Gastrocnemius medialis (tissue), 4 donors: ENCODE measurements at regions of chr20 and their contacts with region 1.

Region 1: GRCh38 chr20:37192137-37192854 is 12.9 kb upstream of the MROH8 start:
- DNase-seq: peak; percentile 74 to 87
- ATAC-seq: peak; percentile 72 to 87
- H3K4me3 ChIP-seq: no peak overlapping the region
- H3K27ac ChIP-seq: peak overlapping the region in 3 of 4 donors; percentile 40 to 72 (median 47)
- H3K4me1 ChIP-seq: peaks cover 47 to 50% of the 10 kb centered on the region in 2 donors
- H3K27me3 ChIP-seq: no peaks in the 10 kb centered on the region
- CTCF ChIP-seq: peak; percentile 73 to 95 (median 85)
- POLR2A ChIP-seq: no peak

Region 2: GRCh38 chr20:37238935-37239451 is 46.7 kb after region 1 on chr20:
- in situ Hi-C with region 1: no loop called
- intact Hi-C with region 1: no loop called
- DNase-seq: no peak
- ATAC-seq: peak in 1 of 2 donors; percentile 39
- H3K4me3 ChIP-seq: no peak overlapping the region
- H3K27ac ChIP-seq: peak overlapping the region in 2 of 4 donors; percentile 23 to 51
- H3K4me1 ChIP-seq: peaks cover 35 to 52% of the 10 kb centered on the region in 2 donors
- H3K27me3 ChIP-seq: no peaks in the 10 kb centered on the region
- CTCF ChIP-seq: no peak
- POLR2A ChIP-seq: no peak

Region 3: DNA sequence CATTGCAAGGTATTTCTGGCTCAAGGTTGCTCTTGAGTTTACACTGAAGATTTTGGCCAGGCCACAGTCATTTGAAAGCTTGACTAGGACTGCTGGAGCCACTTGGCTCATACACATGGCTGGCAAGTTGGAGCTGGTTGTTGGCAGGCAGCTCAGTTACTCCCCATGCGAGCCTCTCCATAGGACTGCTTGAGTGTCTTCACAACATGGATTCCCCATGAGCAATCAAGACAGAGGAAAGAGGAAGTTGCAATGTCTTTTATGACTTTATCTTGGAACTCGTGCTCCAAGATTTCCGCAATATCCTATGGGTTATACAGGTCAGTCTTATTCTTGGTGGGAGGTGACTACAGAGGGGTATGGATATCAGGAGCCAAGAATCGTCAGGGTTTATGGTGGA is 95.8 kb after region 1 on chr20:
- in situ Hi-C with region 1: no loop called
- intact Hi-C with region 1: loop called (anchors 5 kb)
- DNase-seq: peak in 1 of 2 donors; percentile 65
- ATAC-seq: peak; percentile 39 to 43
- H3K4me3 ChIP-seq: no peak overlapping the region
- H3K27ac ChIP-seq: peak overlapping the region in 2 of 4 donors; percentile 3 to 87
- H3K4me1 ChIP-seq: peaks cover 8 to 11% of the 10 kb centered on the region in 2 donors
- H3K27me3 ChIP-seq: no peaks in the 10 kb centered on the region
- CTCF ChIP-seq: no peak
- POLR2A ChIP-seq: no peak

Region 4: DNA sequence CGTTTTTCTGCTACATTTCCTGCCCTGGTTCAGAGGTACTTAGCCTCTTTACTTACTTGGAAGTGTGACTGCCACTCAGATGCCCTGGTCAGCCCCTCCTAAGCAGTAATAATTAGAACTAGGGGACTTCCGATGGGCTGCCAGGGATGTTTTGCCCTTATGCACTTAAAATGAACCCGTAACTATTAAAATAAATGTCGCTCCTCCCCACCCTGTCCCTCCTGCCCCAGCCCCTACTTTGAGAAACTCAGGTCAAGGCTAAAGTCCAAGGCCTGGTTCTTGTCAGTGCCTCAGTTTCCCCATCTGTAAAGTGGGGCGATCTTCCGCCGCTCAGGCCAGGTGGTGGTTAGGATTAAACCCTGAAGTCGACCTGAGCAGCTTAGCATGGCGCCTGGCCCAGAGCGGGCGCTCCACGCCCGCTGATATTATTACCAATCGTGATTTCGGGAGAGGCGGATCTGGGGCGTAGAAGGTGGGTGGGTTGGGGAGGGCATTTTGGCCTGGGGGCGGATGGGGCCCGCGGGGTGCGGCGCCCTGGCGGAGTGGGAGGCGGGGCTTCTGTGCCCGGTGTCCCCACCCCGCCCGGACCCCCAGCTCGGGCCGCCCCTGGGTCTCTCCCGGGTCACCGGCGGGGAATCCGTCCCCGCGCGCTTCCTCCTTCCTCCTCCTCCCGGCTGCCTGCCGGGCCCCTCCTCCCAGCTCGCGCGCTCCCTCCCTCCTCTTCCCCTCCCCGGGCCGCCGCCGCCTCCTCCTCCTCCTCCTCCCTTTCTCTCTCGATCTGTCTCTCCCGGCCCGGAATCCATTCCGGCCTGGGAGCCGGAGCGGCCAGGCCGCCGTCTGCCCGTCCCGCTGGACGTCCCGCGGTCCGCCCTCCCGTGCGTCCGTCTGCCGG is 153.3 kb after region 1 on chr20 and contains the start of gene SRC:
- in situ Hi-C with region 1: no loop called
- intact Hi-C with region 1: no loop called
- DNase-seq: peak; percentile 38 to 55
- ATAC-seq: peak; percentile 51 to 64
- H3K4me3 ChIP-seq: peak within 1 kb of the TSS; percentile 42 to 65 (median 56)
- H3K27ac ChIP-seq: peak within 1 kb of the TSS; percentile 25 to 69 (median 56)
- H3K4me1 ChIP-seq: no peaks in the 10 kb centered on the region
- H3K27me3 ChIP-seq: peaks cover 3 to 13% (median 10%) of the 10 kb centered on the region in 3 donors
- CTCF ChIP-seq: no peak
- POLR2A ChIP-seq: peak; percentile 12 to 17
- total RNA-seq, gene SRC: 1.0 to 2.3 (median 1.8) TPM

Region 5: GRCh38 chr20:37392421-37393178 is 200.3 kb after region 1 on chr20:
- in situ Hi-C with region 1: loop called in 3 of 4 experiments (anchors 5 to 10 kb)
- intact Hi-C with region 1: no loop called
- DNase-seq: no peak
- ATAC-seq: no peak
- H3K4me3 ChIP-seq: no peak overlapping the region
- H3K27ac ChIP-seq: no peak overlapping the region
- H3K4me1 ChIP-seq: no peaks in the 10 kb centered on the region
- H3K27me3 ChIP-seq: peaks cover 6 to 21% (median 16%) of the 10 kb centered on the region in 3 donors
- CTCF ChIP-seq: peak in 1 of 5 experiments; percentile 11
- POLR2A ChIP-seq: no peak